Right ventricle myocardium inferior (tissue), 1 donor: ENCODE measurements at regions of chr20 and their contacts with region 1.

Region 1: GRCh38 chr20:18632196-18633009 is 44.5 kb downstream of the DTD1 start:
- DNase-seq: peak; percentile 74
- ATAC-seq: peak; percentile 88

Region 2: GRCh38 chr20:18678549-18679419 is 46.4 kb after region 1 on chr20:
- intact Hi-C with region 1: no loop called
- DNase-seq: no peak
- ATAC-seq: no peak

Region 3: GRCh38 chr20:18793625-18794427 is 161.4 kb after region 1 on chr20:
- intact Hi-C with region 1: loop called (anchors 10 kb)
- DNase-seq: peak; percentile 95
- ATAC-seq: peak; percentile 99